ENCODE measurements at regions of chr14 and their contacts with region 1.

Region 1: DNA sequence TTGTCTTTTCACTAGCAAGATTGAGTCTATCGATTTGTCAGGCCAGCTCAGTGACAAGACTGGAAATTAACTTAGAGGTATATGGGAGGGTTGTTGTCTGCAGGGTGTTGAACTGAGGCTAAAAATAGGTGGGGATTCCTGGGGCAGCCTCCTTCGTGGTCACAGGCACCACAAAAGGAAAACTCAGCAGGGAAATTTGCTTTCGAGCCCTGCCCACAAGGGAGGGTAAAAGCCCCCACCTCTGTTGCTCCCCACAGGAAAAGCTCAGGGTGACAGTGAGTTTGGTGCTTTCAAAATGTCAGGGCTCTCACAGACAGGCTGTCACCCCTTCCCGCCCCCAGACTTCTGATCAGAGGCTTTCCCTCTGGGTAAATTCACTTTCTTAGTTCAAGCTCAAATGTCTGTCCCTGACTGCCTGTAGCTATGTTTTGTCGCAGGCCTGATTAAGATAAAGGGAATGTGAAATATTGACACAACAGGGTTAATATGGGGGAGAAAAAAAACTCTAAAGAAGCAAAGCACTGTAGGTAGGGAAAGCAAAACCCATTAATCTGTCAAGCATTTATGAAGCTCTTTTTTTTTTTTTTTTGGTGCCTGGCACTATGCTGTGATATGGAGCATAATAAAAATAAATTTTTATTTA is 11.7 kb upstream of the NFKBIA start:
- DNase-seq: no peak
- H3K4me3 ChIP-seq: no peak overlapping the region
- H3K27me3 ChIP-seq: no peaks in the 10 kb centered on the region
- CTCF ChIP-seq: no peak

Region 2: DNA sequence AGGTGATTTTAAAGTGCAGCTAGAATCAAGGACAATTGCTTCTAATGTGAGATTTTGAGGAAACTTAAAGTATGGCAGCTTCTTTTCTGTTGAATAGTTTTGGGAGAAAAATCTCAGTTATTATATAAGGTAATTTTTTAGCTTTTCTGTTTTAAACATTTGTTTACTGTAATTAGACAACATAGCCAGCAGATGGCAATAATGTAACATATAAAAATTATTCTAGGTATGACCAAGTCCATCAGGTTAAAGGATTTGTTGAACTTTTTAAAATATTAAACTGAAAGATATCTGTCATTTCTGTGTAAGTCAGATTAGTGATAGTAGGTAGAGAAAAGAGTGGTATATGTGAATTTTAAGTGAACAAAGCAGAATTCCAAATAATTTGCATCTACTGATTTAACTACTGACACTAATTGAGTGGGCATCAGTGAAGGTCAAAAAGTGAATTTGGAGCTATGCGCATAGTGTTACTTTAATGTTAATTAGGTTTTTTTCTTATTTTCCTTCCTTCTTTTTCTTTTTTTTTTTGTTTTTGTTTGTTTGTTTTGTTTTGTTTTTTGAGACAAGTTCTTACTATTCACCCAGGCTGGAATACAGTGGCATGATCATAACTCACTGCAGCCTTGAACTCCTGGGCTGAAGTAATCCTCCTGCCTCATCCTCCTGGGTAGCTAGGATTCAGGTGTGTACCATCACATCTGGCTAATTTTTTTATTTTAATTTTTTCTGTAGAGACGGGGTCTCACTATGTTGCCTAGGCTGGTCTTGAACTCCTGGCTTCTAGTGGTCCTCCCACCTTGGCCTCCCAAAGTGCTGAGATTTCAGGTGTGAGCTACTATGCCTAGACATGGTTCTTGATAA is 275.3 kb before region 1 on chr14:
- CTCF ChIA-PET with region 1: interaction called, 44 read pairs
- POLR2A ChIA-PET with region 1: no interaction called
- DNase-seq: no peak
- H3K4me3 ChIP-seq: no peak overlapping the region
- H3K27me3 ChIP-seq: no peaks in the 10 kb centered on the region
- CTCF ChIP-seq: no peak

Region 3: GRCh38 chr14:35215110-35215876 is 200.9 kb before region 1 on chr14:
- CTCF ChIA-PET with region 1: interaction called, 28 read pairs
- POLR2A ChIA-PET with region 1: no interaction called
- DNase-seq: peak; percentile 29
- H3K4me3 ChIP-seq: no peak overlapping the region
- H3K27me3 ChIP-seq: no peaks in the 10 kb centered on the region
- CTCF ChIP-seq: peak; percentile 65

Region 4: GRCh38 chr14:35261774-35262173 is 154.5 kb before region 1 on chr14:
- CTCF ChIA-PET with region 1: interaction called, 10 read pairs
- POLR2A ChIA-PET with region 1: no interaction called
- DNase-seq: no peak
- H3K4me3 ChIP-seq: no peak overlapping the region
- H3K27me3 ChIP-seq: no peaks in the 10 kb centered on the region
- CTCF ChIP-seq: peak; percentile 17; the same call in 1 of the 2 replicates

Region 5: DNA sequence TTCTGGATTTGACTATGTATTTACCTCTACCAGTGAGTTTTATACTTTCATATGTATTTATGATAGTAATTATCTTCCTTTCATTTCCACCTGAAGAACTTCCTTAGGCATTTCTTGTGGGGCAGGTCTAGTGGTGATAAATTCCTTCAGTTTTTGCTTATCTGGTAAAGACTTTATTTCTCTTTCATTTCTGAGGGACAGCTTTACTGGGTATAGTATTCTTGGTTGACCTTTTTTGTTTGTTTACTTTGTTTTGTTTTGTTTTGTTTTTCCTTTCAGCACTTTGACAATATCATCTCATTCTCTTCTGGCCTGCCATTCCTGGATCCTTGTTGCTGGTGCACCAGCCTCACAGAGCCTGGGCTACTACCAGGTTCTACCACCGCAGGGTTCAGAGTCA is 42.2 kb after region 1 on chr14:
- CTCF ChIA-PET with region 1: no interaction called
- POLR2A ChIA-PET with region 1: no interaction called
- DNase-seq: no peak
- H3K4me3 ChIP-seq: no peak overlapping the region
- H3K27me3 ChIP-seq: no peaks in the 10 kb centered on the region
- CTCF ChIP-seq: no peak